GM18951 (cell line): ENCODE measurements at regions of chr3 and their contacts with region 1.

Region 1: GRCh38 chr3:46378426-46378942 is 7.7 kb downstream of the CCR5 start:
- POLR2A ChIP-seq: no peak

Region 2: GRCh38 chr3:46214751-46215352 is 163.6 kb before region 1 on chr3:
- in situ Hi-C with region 1: loop called (anchors 10 kb)
- POLR2A ChIP-seq: no peak

Region 3: DNA sequence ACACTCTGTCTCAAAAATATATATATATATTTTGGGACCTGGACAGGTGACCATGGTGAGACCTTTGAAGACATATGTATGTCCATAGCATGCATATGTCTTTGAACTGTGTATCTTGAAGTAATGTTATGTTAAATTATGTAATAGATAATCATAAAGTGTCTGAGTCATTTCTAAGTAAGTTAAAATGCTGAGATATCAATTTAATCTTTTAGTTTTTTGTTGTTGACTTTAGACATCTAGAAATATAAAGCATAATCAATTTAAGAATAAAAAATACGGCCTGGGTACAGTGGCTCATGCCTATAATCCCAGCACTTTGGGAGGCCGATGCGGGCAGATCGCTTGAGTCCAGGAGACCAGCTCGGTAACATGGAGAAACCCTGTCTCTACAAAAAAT is 798.1 kb after region 1 on chr3:
- in situ Hi-C with region 1: no loop called
- POLR2A ChIP-seq: no peak